Heart left ventricle (tissue), 16 donors: ENCODE measurements at regions of chr22 and their contacts with region 1.

Region 1: GRCh38 chr22:40645579-40646197 is 9.2 kb upstream of the MRTFA start:
- DNase-seq: no peak
- ATAC-seq: no peak
- H3K4me3 ChIP-seq: no peak overlapping the region
- H3K27ac ChIP-seq: peak overlapping the region in 1 of 12 donors; percentile 76
- H3K4me1 ChIP-seq: peaks cover 0 to 8% (median 0%) of the 10 kb centered on the region in 12 donors
- H3K27me3 ChIP-seq: no peaks in the 10 kb centered on the region
- CTCF ChIP-seq: no peak
- POLR2A ChIP-seq: no peak

Region 2: DNA sequence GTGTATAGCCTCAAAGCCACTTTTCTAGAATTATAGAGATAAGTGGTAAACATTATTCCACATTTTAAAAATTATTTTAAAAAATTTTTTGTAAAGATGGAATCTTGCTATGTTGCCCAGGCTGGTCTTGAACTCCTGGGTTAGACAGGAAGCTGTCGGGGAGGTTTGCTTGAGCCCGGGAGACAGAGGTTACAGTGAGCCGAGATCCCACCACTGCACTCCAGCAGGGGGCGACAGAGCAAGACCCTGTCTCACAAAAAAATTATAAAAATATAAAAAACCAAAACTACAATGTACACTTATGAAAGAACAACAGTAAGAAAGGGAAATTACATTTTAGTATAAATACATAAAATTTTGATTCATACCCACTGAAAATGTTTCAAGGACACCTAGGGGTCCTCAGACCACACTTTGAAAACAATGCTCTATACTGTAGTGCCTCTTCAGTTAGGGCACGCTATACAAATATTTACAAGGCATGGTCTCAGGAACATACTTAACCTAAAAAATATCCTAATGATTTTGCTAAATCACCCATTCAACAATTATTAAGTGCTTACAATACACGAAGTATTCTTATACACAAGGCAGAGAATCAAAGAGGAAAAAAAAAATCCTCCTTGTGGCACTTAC is 120.3 kb before region 1 on chr22:
- intact Hi-C with region 1: loop called (anchors 2 to 10 kb)
- DNase-seq: peak in 4 of 5 donors; percentile 41 to 70 (median 46)
- ATAC-seq: peak in 1 of 4 donors; percentile 58
- H3K4me3 ChIP-seq: no peak overlapping the region
- H3K27ac ChIP-seq: peak overlapping the region in 1 of 12 donors; percentile 30
- H3K4me1 ChIP-seq: peaks cover 0 to 19% (median 0%) of the 10 kb centered on the region in 12 donors
- H3K27me3 ChIP-seq: no peaks in the 10 kb centered on the region
- CTCF ChIP-seq: peak; percentile 55 to 78 (median 72)
- POLR2A ChIP-seq: no peak

Region 3: DNA sequence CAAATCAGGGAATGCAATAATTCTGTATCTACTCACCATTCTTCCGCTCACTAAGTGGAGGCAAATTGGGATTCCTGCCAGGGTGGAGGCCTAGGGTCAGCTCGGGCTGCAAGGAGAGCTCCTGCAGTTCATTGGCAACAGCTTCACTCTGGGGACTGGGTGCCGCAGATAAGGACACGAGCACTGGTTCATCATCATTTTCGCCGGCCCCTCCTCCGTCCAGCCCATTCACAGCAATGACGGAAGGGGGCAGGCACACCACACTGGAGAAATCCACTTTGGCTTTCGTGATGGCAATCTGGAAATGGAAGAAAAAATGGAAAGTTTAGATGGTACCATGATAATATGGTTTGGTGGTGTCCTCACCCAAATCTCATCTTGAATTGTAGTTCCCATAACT is 93.6 kb before region 1 on chr22:
- intact Hi-C with region 1: loop called in 8 of 10 experiments (anchors 2 to 10 kb)
- DNase-seq: peak; percentile 68 to 87 (median 80)
- ATAC-seq: peak; percentile 89 to 95 (median 91)
- H3K4me3 ChIP-seq: no peak overlapping the region
- H3K27ac ChIP-seq: no peak overlapping the region
- H3K4me1 ChIP-seq: peaks cover 0 to 17% (median 5%) of the 10 kb centered on the region in 12 donors
- H3K27me3 ChIP-seq: no peaks in the 10 kb centered on the region
- CTCF ChIP-seq: peak in 11 of 12 donors; percentile 33 to 64 (median 48)
- POLR2A ChIP-seq: no peak

Region 4: DNA sequence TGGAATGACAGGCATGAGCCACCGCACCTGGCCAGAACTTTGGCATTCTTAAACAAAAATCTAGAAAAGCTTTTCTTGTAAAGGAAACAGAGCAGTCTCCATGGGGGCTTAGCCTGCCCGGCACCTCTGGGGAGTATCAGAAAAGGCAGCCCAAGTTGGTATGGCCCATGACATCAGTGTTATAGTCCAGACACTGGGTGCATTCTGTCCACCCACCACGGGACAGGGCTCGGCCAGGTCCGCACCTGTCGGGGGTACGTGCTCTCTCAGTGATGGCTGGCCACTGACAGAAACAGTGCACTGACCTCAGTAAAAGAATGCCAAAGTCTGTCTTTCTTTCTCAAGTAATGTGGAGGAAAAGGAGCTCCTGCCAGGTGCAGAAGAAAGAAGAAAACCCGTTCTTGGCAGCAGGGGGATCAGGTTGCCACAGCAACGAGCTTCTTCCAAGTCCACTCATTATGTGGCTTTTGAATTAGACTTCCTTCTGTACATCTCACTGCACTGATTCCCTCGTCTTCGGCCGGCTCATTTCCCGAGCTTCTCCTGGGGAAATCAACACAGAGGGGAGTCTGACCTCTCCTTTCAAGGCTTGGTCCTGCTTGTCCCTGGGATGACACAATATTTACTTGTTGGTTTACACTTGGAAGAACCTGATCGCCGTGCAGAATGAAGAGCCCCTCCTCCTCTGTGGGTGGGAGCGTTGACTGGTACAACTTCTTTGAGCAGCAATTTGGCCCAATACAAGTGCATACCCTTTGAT is 68.7 kb after region 1 on chr22:
- intact Hi-C with region 1: no loop called
- DNase-seq: no peak
- ATAC-seq: no peak
- H3K4me3 ChIP-seq: no peak overlapping the region
- H3K27ac ChIP-seq: no peak overlapping the region
- H3K4me1 ChIP-seq: peaks cover 0 to 29% (median 24%) of the 10 kb centered on the region in 12 donors
- H3K27me3 ChIP-seq: no peaks in the 10 kb centered on the region
- CTCF ChIP-seq: no peak
- POLR2A ChIP-seq: no peak